K562 (cell line): ENCODE measurements at regions of chr12 and their contacts with region 1.

Region 1: DNA sequence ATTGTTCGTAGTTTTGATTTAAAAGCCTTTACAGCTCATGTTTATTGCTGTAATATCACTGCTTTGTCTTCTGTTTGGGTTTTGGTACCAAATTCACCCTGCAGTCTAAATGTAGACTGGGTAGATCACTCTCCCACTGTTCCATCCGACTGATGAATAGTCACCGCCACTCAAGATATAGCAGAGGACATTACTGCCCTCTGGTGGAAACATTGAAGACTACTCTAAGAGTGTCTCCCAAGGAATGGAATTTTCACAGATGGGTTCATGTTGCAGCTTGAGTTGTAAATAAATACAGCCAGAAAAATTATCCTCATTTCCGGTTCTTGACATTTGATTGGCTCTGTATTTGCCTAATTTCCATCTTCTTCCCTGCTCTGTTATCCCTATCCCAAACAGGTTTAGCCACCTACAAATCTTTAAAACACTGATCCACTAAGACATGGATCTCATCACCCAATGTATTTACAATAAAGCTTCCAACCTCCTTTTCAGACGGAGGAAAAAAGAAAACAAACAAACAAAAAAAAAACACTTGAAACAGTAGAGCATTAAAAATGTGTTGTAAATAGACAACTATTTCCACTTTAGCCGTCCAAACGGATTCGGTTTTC is 198.3 kb upstream of the CPNE8 start:
- DNase-seq: peak; percentile 35 to 63 (median 48)
- ATAC-seq: peak; percentile 89
- H3K4me3 ChIP-seq: no peak overlapping the region
- H3K27ac ChIP-seq: no peak overlapping the region
- H3K4me1 ChIP-seq: no peaks in the 10 kb centered on the region
- H3K27me3 ChIP-seq: no peaks in the 10 kb centered on the region
- CTCF ChIP-seq: peak; percentile 45 to 65 (median 52)
- EP300 ChIP-seq: no peak
- POLR2A ChIP-seq: no peak
- RAD21 ChIP-seq: peak; percentile 73 to 84

Region 2: GRCh38 chr12:38138225-38139221 is 965.1 kb before region 1 on chr12:
- CTCF ChIA-PET with region 1: no interaction called
- POLR2A ChIA-PET with region 1: no interaction called
- in situ Hi-C with region 1: loop called (anchors 5 kb)
- intact Hi-C with region 1: loop called (anchors 5 kb)
- DNase-seq: peak; percentile 49 to 63 (median 53)
- ATAC-seq: peak; percentile 81
- H3K4me3 ChIP-seq: no peak overlapping the region
- H3K27ac ChIP-seq: no peak overlapping the region
- H3K4me1 ChIP-seq: peaks cover 0 to 4% of the 10 kb centered on the region in 2 experiments; a peak in 2 of 5 replicates
- H3K27me3 ChIP-seq: no peaks in the 10 kb centered on the region
- CTCF ChIP-seq: peak; percentile 57 to 90 (median 88)
- EP300 ChIP-seq: no peak
- POLR2A ChIP-seq: no peak
- RAD21 ChIP-seq: peak; percentile 42 to 73; a peak in 3 of 4 replicates

Region 3: GRCh38 chr12:38324896-38325295 is 778.8 kb before region 1 on chr12:
- CTCF ChIA-PET with region 1: no interaction called
- POLR2A ChIA-PET with region 1: no interaction called
- in situ Hi-C with region 1: loop called (anchors 25 kb)
- intact Hi-C with region 1: loop called (anchors 5 kb)
- DNase-seq: no peak
- ATAC-seq: no peak
- H3K4me3 ChIP-seq: no peak overlapping the region
- H3K27ac ChIP-seq: no peak overlapping the region
- H3K4me1 ChIP-seq: no peaks in the 10 kb centered on the region
- H3K27me3 ChIP-seq: no peaks in the 10 kb centered on the region
- CTCF ChIP-seq: no peak
- EP300 ChIP-seq: no peak
- POLR2A ChIP-seq: no peak
- RAD21 ChIP-seq: no peak

Region 4: DNA sequence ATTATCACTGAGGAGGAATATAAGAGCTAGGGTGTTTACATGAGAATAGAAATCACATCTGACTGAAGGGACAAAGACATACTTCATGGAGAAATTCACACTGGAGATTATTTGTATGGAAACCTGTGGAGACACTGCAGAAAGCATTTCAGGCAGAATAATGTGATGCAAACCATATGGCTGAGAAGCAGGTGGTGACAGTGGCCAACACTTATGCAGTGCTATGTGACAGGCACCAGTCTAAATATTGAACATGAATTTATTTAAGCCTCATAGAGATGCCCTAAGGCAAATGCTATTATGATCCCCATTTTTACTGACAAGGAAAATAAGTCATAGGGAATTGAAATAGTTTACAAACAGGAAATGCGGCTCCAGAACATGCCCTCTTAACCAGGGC is 770.8 kb before region 1 on chr12:
- CTCF ChIA-PET with region 1: no interaction called
- POLR2A ChIA-PET with region 1: no interaction called
- in situ Hi-C with region 1: loop called (anchors 25 kb)
- intact Hi-C with region 1: loop called (anchors 5 kb)
- DNase-seq: no peak
- ATAC-seq: no peak
- H3K4me3 ChIP-seq: no peak overlapping the region
- H3K27ac ChIP-seq: no peak overlapping the region
- H3K4me1 ChIP-seq: no peaks in the 10 kb centered on the region
- H3K27me3 ChIP-seq: no peaks in the 10 kb centered on the region
- CTCF ChIP-seq: no peak
- EP300 ChIP-seq: no peak
- POLR2A ChIP-seq: no peak
- RAD21 ChIP-seq: no peak

Region 5: DNA sequence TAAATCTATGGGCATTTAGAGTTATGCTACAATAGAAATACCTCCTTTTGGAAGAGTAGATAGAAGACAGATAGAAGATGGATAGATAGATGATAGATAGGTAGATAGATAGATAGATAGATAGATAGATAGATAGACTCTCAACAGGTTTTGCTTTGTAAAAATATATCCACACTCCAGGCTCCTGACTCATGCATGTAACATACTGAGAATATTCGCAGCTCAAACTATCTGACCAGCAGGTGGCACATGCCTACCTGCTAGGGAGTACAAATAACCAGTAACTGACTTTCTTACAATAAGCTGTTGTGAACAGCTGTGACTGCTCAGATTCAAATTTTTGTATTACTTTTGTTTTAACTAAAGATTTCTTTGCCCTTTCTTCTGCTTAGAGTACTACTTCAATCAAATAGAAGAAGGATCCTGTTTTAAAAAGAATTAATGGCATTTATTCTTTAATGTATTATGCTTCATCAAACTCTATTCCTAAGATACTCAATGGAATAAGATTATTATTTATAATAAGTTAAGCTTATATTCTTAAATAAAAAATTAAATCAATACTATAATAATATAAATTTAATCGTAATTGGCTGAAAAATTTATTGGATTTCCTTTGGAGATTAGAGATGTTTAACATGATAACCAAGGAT is 182.5 kb before region 1 on chr12:
- CTCF ChIA-PET with region 1: interaction called, 3 read pairs
- POLR2A ChIA-PET with region 1: no interaction called
- in situ Hi-C with region 1: no loop called
- intact Hi-C with region 1: loop called (anchors 1 kb)
- DNase-seq: peak; percentile 17 to 67 (median 19)
- ATAC-seq: peak; percentile 70
- H3K4me3 ChIP-seq: no peak overlapping the region
- H3K27ac ChIP-seq: no peak overlapping the region
- H3K4me1 ChIP-seq: no peaks in the 10 kb centered on the region
- H3K27me3 ChIP-seq: no peaks in the 10 kb centered on the region
- CTCF ChIP-seq: peak; percentile 32 to 54 (median 39); a peak in 3 of 6 replicates
- EP300 ChIP-seq: no peak
- POLR2A ChIP-seq: no peak
- RAD21 ChIP-seq: peak; percentile 53 to 74

Region 6: DNA sequence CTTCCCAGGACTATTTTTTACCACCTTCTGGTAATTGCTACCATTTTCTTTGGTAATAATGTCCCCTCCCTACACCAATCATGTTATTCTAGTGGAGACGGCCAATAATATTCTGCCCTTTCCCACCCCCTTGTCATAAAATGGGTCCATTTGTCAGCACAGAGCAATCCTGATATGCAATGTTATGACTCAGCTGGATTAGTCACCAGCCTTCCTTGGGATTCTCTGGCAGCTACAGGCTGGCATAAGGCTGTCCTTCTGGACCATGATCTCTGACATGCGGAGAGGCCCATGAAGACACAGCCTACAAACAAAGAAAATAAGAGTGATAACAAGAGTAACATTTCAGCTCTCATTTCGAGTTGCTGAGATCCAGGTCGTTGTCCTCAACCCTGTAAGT is 23.7 kb after region 1 on chr12:
- CTCF ChIA-PET with region 1: no interaction called
- POLR2A ChIA-PET with region 1: no interaction called
- in situ Hi-C with region 1: no loop called
- intact Hi-C with region 1: no loop called
- DNase-seq: no peak
- ATAC-seq: no peak
- H3K4me3 ChIP-seq: no peak overlapping the region
- H3K27ac ChIP-seq: no peak overlapping the region
- H3K4me1 ChIP-seq: no peaks in the 10 kb centered on the region
- H3K27me3 ChIP-seq: no peaks in the 10 kb centered on the region
- CTCF ChIP-seq: no peak
- EP300 ChIP-seq: no peak
- POLR2A ChIP-seq: no peak
- RAD21 ChIP-seq: no peak